Ascending aorta (tissue), 2 donors: ENCODE measurements at regions of chr6 and their contacts with region 1.

Region 1: DNA sequence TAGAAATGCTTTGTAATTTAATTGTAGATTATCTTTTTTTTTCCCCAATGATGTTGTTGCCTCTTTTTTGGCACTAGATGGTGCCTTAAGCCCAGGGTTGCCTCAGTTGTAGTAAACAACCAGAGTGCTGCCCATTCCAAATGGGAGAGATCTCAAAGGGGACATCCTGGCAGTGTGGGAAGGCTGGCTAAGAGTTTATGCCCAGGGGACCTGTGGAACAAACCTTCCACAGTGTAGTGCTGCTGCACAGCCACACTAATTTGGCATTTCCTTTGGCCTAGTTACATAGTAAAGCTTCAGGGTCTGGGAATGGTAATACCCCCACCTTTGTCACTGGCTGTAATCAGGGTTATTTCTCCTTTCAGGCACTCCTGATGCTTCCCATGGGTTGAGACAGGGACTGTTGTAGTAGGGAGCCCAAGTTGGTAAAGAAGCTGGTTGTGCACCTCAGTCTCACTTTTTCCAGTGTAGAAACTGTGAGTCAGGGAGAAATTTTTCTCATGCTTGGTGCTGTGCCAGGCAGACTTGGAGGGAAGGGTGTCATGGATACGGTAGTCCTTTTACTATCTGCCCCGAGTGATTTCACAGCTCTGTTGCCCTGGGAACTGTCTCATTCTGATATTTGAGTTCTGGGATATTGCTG is 177.8 kb upstream of the ECI2 start:
- DNase-seq: peak in 1 of 2 donors; percentile 87
- H3K4me3 ChIP-seq: peak overlapping the region in 1 of 2 donors; percentile 12
- H3K27ac ChIP-seq: peak overlapping the region; percentile 46 to 64
- H3K4me1 ChIP-seq: peaks cover 0 to 11% of the 10 kb centered on the region in 2 donors
- H3K27me3 ChIP-seq: no peaks in the 10 kb centered on the region
- CTCF ChIP-seq: peak in 2 of 3 experiments; percentile 23 to 40

Region 2: GRCh38 chr6:4327841-4328240 is 14.7 kb after region 1 on chr6:
- intact Hi-C with region 1: no loop called
- DNase-seq: no peak
- H3K4me3 ChIP-seq: no peak overlapping the region
- H3K27ac ChIP-seq: no peak overlapping the region
- H3K4me1 ChIP-seq: no peaks in the 10 kb centered on the region
- H3K27me3 ChIP-seq: no peaks in the 10 kb centered on the region
- CTCF ChIP-seq: no peak

Region 3: GRCh38 chr6:4351520-4352315 is 38.6 kb after region 1 on chr6:
- intact Hi-C with region 1: loop called (anchors 1 kb)
- DNase-seq: peak; percentile 26 to 90
- H3K4me3 ChIP-seq: peak overlapping the region; percentile 27 to 35
- H3K27ac ChIP-seq: peak overlapping the region; percentile 45 to 58
- H3K4me1 ChIP-seq: peaks cover 6 to 8% of the 10 kb centered on the region in 2 donors
- H3K27me3 ChIP-seq: no peaks in the 10 kb centered on the region
- CTCF ChIP-seq: no peak

Region 4: DNA sequence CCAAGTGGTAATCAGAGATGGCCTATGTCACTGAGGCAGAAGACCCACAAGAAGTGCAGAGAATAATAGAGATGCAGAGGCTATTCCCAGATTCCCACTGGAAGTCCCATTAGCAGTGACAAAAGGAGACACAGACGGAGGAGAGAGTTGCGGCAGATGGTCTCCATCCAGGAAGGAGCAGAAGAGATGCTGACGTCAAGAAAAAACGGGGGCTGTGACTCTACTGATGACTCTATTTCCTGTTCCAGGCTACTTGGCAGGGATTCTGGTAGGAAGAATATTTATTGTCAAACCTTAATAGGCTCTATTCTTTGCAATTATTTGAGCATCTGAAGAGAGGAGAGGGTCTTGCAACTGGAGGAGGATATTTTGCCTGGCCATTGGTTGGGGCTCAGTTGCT is 68.2 kb after region 1 on chr6:
- intact Hi-C with region 1: no loop called
- DNase-seq: no peak
- H3K4me3 ChIP-seq: no peak overlapping the region
- H3K27ac ChIP-seq: no peak overlapping the region
- H3K4me1 ChIP-seq: no peaks in the 10 kb centered on the region
- H3K27me3 ChIP-seq: no peaks in the 10 kb centered on the region
- CTCF ChIP-seq: no peak

Region 5: DNA sequence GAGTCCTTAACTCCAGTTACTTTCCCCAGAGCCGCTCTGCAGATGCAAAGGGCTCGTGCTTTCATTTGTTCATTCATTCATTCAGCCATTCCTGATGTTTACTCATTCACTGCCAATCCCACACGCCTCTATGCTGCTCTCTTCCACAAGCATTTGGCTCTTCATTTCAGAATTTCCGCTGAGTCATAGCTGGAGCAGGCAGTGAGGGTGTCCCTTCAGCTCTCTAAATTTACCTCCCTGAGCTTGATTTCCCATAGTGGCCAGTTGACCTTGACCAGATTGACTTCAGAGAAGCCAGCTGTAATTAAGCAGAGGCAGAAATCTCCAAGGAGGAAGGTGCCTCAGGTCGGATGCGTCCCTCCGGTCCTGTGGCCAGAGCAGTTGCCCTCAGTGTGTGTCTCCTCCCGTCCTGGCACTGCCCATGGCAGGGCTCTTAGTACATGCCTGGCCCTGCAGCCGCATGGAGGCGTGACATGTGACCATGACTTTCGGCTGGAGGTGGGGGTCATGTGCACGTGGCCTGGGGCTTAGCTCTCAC is 89.3 kb after region 1 on chr6:
- intact Hi-C with region 1: loop called (anchors 10 kb)
- DNase-seq: no peak
- H3K4me3 ChIP-seq: peak overlapping the region in 1 of 2 donors; percentile 6
- H3K27ac ChIP-seq: peak overlapping the region; percentile 37 to 46
- H3K4me1 ChIP-seq: peaks cover 0 to 11% of the 10 kb centered on the region in 2 donors
- H3K27me3 ChIP-seq: no peaks in the 10 kb centered on the region
- CTCF ChIP-seq: no peak

Region 6: GRCh38 chr6:4936681-4937041 is 623.5 kb after region 1 on chr6:
- intact Hi-C with region 1: loop called (anchors 5 kb)
- DNase-seq: no peak
- H3K4me3 ChIP-seq: no peak overlapping the region
- H3K27ac ChIP-seq: no peak overlapping the region
- H3K4me1 ChIP-seq: peaks cover 0 to 2% of the 10 kb centered on the region in 2 donors
- H3K27me3 ChIP-seq: no peaks in the 10 kb centered on the region
- CTCF ChIP-seq: peak; percentile 29 to 60 (median 29)

Region 7: GRCh38 chr6:5085193-5085647 is 772.1 kb after region 1 on chr6 and contains the start of gene PPP1R3G:
- intact Hi-C with region 1: loop called (anchors 10 kb)
- DNase-seq: no peak
- H3K4me3 ChIP-seq: peak within 1 kb of the TSS; percentile 70 to 73
- H3K27ac ChIP-seq: peak within 1 kb of the TSS; percentile 71 to 79
- H3K4me1 ChIP-seq: peaks cover 0 to 7% of the 10 kb centered on the region in 2 donors
- H3K27me3 ChIP-seq: no peaks in the 10 kb centered on the region
- CTCF ChIP-seq: no peak
- total RNA-seq, gene PPP1R3G: 1.1 TPM